ENCODE measurements at regions of chr12 and their contacts with region 1.

Region 1: DNA sequence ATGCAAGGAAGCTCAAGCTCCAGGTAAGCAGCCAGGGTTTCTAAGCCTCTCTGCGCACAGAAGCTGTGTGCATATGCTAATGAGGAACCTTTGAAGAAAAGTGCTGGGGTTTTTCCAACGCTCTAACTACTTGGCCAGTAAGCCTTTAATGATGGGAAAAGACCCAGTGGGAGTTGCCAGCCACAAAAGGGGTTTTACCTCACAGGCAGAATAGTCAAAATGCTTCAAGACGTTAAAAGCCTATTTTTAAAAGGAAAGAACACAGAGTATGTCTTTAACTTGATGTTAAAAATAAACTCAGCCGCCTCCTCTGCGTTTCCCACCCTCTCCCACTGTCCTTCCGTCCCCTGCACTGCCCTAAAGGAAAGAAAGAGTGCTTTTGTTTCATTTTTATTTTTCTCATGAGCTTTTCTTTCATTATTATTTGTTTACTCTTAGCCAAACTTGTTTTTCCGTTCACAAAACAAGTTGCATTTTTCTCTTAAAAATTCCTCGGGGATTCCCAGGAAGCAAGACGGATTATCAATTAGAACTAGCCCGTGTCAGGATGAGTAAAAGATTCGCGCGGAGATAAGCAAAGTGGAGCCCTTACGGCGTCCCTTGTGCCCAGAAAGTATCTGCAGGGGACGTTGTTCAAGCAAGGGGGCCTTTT is 209.8 kb upstream of the NUDT4 start:
- DNase-seq: no peak
- ATAC-seq: peak; percentile 34

Region 2: GRCh38 chr12:91432089-91432488 is 1735.9 kb before region 1 on chr12:
- intact Hi-C with region 1: no loop called
- DNase-seq: no peak
- ATAC-seq: peak; percentile 62

Region 3: GRCh38 chr12:92356425-92356824 is 811.5 kb before region 1 on chr12:
- intact Hi-C with region 1: loop called (anchors 5 kb)
- DNase-seq: no peak
- ATAC-seq: no peak

Region 4: DNA sequence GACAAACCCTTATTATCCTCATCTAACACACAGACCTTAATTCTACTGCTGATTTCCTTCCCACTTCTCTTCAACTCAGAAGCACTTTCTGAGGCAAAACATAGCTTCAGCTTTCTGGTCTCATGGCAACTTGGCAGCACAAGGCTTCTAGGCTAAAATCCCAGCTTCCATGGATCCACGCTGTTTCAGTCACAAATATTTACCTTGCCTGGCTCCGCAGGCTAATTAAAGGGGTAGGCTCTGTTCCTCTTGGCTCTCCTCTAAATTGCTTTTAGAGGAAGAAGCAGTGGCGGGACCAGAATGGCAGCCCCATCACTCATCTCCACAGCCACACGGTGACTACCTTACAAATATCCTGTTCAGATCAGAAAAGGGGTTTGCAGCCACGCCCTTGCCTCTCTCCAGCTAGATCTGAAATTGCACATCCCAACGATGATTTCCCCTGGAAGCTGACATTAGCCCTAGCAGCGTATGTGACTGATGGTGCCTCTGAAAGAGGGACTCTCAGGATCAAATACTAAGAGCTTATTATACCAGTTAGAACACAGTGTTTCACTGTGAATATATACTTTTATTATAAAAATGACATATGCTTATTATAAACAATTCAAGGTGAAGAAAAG is 11.8 kb before region 1 on chr12:
- intact Hi-C with region 1: no loop called
- DNase-seq: no peak
- ATAC-seq: no peak

Measured in sciatic nerve (tissue), 2 donors.